ENCODE measurements at regions of chr4 and their contacts with region 1.

Region 1: DNA sequence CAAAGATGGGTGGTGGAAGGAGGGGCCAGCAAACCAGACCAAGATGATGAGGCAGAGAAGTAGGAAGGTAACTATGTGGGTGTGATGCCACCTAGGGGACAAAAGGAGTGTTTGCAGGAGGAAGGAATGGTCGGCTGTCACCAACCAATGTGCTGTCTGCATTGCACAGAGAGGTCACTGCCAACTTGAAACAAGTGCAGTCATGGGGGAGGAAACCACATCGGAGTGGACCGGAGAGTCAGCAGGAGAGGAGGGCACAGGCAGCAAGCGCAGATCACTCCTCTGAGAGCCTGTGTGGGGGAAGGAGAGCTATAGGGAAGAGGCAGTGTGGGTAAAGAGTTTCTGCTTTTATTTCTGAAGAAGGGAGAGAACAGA is 38.5 kb upstream of the FGFBP2 start:
- DNase-seq: peak; percentile 71 to 73
- H3K4me3 ChIP-seq: no peak overlapping the region
- H3K4me1 ChIP-seq: no peaks in the 10 kb centered on the region
- H3K27me3 ChIP-seq: peaks cover 3% of the 10 kb centered on the region

Region 2: DNA sequence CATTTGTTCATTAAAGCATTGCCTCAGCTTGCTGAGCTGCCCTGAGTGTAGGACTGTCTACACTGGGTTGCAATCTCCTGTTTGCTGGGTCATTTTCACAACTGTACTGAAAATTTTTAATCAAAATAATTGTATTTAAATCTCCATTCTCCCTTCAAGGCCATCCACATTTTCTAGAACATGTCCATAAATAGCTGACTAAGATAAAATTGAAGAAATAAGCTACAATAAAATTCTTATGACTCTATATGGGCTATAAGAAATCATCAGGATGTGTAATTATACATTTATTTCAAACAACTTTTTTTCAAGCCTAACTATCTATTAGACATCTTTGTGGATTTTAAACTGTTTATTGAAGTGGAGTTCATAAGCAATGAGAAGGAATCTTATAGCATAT is 1271.9 kb before region 1 on chr4:
- in situ Hi-C with region 1: no loop called
- DNase-seq: no peak
- H3K4me3 ChIP-seq: no peak overlapping the region
- H3K4me1 ChIP-seq: no peaks in the 10 kb centered on the region
- H3K27me3 ChIP-seq: no peaks in the 10 kb centered on the region

Region 3: DNA sequence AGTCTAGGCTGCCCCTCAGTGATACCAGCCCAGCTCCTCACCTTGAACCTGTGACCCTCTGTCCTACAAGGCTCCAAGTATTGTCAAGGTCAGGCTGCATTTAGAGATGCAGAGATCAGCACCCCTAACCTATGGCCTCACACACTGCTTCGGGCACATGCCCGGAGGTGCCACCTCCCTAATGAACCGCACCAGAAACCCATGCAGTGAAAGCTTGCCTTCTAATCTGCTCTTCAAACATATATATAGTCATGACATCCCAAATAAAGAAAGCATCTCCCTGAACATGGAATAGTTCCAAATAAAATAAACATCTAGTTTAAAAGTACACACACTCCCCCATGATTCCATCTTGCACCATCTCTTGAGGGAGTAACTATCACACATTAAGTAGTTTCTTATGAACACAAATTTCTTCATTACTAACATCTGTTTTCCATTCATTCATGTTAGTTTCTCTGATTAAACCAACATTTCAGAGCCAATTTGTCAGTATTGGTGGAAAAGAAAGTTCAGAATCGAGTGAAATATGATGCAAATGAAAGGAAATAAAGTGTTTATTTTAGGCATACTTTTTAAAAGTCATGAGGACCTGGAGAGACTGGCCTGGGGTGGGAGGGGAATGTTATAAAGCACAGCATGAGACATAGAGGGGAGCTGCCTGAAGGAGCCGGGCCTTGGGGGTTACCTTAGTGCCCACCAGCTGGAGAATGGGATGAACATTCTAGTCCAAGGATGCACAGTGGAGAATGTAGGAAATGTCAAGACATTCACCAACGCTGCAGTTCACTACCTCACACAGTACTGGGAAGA is 512.6 kb before region 1 on chr4:
- in situ Hi-C with region 1: no loop called
- DNase-seq: no peak
- H3K4me3 ChIP-seq: no peak overlapping the region
- H3K4me1 ChIP-seq: peaks cover 5% of the 10 kb centered on the region; the same call in 1 of the 2 replicates
- H3K27me3 ChIP-seq: no peaks in the 10 kb centered on the region

Region 4: GRCh38 chr4:15805583-15806517 is 195.6 kb before region 1 on chr4:
- in situ Hi-C with region 1: loop called (anchors 10 kb)
- DNase-seq: peak; percentile 51 to 74
- H3K4me3 ChIP-seq: no peak overlapping the region
- H3K4me1 ChIP-seq: no peaks in the 10 kb centered on the region
- H3K27me3 ChIP-seq: peaks cover 10% of the 10 kb centered on the region; the same call in 1 of the 2 replicates

Region 5: GRCh38 chr4:15882675-15883086 is 118.8 kb before region 1 on chr4:
- in situ Hi-C with region 1: loop called (anchors 10 kb)
- DNase-seq: peak; percentile 61 to 65
- H3K4me3 ChIP-seq: no peak overlapping the region
- H3K4me1 ChIP-seq: no peaks in the 10 kb centered on the region
- H3K27me3 ChIP-seq: no peaks in the 10 kb centered on the region

Region 6: DNA sequence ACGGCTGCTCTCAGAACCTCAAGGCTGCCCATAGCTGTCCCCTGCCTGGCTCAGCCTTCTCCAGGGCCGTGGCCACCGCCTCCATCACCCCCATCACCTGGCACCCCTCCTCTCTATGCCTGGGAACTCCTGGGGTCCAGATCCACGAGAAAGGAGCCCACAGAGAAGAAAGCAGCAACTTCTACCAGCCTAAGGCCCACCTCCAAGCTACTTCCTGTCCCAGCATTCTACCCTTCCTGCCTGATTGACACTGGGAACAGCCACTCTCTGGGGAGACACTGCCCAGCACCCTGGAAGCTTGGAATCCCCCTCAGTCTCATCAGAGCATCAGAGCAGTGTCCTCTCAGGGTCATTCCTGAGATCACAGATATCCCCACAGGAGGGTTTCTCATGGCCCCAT is 119.2 kb after region 1 on chr4:
- in situ Hi-C with region 1: no loop called
- DNase-seq: no peak
- H3K4me3 ChIP-seq: no peak overlapping the region
- H3K4me1 ChIP-seq: no peaks in the 10 kb centered on the region
- H3K27me3 ChIP-seq: peaks cover 21% of the 10 kb centered on the region

Measured in HAP-1 (cell line).